HCT116 (cell line): ENCODE measurements at regions of chr1 and their contacts with region 1.

Region 1: DNA sequence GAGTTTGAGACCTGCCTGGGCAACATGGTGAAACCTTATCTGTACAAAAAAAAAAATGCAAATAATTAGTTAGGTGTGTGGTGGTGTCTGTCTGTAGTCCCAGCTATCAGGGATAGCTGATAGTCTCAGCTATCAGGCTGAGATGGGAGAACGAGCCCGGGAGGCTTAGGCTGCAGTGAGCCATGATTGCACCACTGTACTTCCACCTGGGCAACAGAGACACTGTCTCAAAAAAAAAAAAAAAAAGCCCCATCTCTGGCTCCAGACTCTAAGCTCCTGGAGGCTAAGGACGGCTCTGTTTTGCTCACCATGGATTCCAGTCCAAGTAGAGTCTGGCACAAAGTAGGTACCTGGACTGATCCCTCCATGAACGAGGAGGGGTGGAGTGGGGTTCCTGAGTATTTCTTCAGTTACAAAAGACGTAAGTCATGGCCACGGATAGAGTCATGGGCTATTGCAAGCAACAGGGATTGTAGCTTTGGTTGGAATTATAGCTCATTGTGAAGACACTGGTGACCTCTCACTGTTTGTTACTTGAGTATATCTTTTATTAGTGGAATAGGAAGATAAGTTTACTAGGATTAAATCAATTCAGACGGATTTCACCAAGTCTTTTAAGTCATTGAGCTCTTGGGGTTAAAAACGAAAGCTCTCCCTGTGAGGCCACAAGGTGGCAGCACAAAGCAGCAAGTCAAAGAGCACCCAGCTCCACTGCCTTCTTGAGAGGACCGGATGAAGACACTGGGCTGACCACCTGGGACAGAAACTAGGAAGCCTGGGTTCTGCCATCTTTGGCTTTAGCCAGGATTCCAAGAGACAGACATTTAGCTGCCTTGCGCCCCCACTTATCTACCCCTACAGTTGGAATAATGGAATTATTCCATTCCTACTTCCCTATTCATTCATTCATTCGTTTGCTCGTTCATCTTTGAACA is 35.6 kb upstream of the TMEM61 start:
- DNase-seq: peak; percentile 83
- ATAC-seq: peak; percentile 95
- H3K4me3 ChIP-seq: peak overlapping the region; percentile 15 to 45; a peak in 3 of 4 replicates
- H3K27ac ChIP-seq: no peak overlapping the region
- H3K4me1 ChIP-seq: peaks cover 3 to 8% of the 10 kb centered on the region in 2 experiments; a peak in 3 of 4 replicates
- H3K27me3 ChIP-seq: no peaks in the 10 kb centered on the region
- CTCF ChIP-seq: peak; percentile 86 to 96 (median 89)
- POLR2A ChIP-seq: no peak
- RAD21 ChIP-seq: peak; percentile 92

Region 2: GRCh38 chr1:54977533-54978297 is 32.8 kb after region 1 on chr1:
- CTCF ChIA-PET with region 1: interaction called, 11 read pairs
- POLR2A ChIA-PET with region 1: no interaction called
- RAD21 ChIA-PET with region 1: interaction called in 1 of 2 experiments, 6 read pairs
- intact Hi-C with region 1: no loop called
- DNase-seq: no peak
- ATAC-seq: no peak
- H3K4me3 ChIP-seq: no peak overlapping the region
- H3K27ac ChIP-seq: no peak overlapping the region
- H3K4me1 ChIP-seq: peaks cover 0 to 41% of the 10 kb centered on the region in 2 experiments; a peak in 3 of 4 replicates
- H3K27me3 ChIP-seq: no peaks in the 10 kb centered on the region
- CTCF ChIP-seq: no peak
- POLR2A ChIP-seq: no peak
- RAD21 ChIP-seq: no peak

Region 3: DNA sequence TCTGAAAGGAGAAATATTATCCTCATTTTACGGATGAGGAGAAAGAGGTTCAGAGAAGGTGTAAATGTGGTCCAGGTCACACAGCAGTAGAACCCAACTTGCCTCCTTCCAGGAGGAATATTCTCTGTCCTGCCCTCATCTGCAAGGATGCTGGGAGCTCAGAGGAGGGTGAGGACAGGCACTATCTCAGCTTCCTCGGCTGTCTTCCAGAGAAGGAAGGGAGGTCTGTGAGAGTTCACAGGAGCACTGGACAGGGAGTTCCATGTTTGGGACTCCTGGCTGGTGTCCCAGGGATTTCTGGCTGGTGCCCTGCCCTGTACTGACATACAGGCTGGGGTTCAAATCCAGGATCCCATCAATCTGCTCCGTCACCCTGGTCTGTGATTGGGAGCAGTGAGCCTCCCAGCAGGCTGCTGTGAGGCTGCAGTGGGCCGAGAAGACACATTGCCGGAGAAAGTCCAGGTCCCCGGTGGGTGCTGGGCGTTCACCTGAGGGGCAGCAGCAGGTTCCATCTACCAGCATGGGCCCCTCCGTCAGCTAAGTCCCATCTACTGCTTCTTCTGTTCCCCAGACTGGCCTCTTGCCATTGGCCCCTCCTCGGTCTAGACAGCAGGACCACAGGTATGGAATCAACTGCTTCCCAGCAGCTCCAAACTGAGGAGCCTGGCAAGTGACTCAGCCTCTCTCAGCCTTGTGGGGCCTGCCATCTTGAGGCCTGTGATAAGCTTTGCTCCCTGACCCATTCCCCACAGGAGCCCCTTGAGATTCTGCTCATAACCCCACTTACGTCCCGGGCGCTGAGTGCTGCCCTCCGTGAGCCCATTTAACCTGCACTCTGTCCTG is 45.3 kb after region 1 on chr1:
- CTCF ChIA-PET with region 1: interaction called, 85 read pairs
- POLR2A ChIA-PET with region 1: interaction called, 3 read pairs
- RAD21 ChIA-PET with region 1: interaction called, 20 to 25 read pairs
- intact Hi-C with region 1: no loop called
- DNase-seq: no peak
- ATAC-seq: no peak
- H3K4me3 ChIP-seq: no peak overlapping the region
- H3K27ac ChIP-seq: no peak overlapping the region
- H3K4me1 ChIP-seq: peaks cover 0 to 4% of the 10 kb centered on the region in 2 experiments; a peak in 1 of 4 replicates
- H3K27me3 ChIP-seq: no peaks in the 10 kb centered on the region
- CTCF ChIP-seq: no peak
- POLR2A ChIP-seq: no peak
- RAD21 ChIP-seq: no peak